Naive thymus-derived CD4-positive, alpha-beta T cell (primary cell): ENCODE measurements at regions of chr14 and their contacts with region 1.

Region 1: DNA sequence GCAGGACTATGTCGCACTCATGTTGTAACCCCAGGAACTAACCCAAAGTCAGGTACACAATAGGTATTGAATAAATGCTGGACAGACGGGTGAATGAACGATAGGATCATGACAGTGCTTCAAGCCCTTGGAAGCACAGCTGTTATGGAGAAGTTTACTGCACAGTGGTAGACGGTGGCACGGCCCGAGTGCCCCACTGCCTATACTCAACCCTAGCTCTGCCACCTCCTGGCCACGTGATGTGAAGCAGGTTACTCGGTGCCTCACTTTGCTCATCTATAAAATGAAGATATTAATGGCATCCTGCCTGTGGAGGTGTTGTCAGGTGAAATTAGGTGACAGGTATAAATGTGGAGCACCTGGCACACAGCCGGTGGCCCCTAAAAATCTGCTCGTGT is 5.8 kb downstream of the ASB2 start:
- DNase-seq: peak in 8 of 9 donors; percentile 43 to 63 (median 56)
- ATAC-seq: peak; percentile 93
- H3K4me3 ChIP-seq: peak overlapping the region; percentile 72
- H3K4me3 Mint-ChIP-seq: peak overlapping the region; percentile 82 to 93 (median 89)
- H3K27ac ChIP-seq: no peak overlapping the region
- H3K27ac Mint-ChIP-seq: peak overlapping the region in 8 of 9 donors; percentile 21 to 99 (median 70)
- H3K4me1 ChIP-seq: peaks cover 13 to 24% of the 10 kb centered on the region in 2 donors
- H3K4me1 Mint-ChIP-seq: peaks cover 14 to 91% (median 19%) of the 10 kb centered on the region in 7 donors
- H3K27me3 ChIP-seq: no peaks in the 10 kb centered on the region
- H3K27me3 Mint-ChIP-seq: peaks cover 0 to 2% (median under 1%) of the 10 kb centered on the region in 5 donors

Region 2: DNA sequence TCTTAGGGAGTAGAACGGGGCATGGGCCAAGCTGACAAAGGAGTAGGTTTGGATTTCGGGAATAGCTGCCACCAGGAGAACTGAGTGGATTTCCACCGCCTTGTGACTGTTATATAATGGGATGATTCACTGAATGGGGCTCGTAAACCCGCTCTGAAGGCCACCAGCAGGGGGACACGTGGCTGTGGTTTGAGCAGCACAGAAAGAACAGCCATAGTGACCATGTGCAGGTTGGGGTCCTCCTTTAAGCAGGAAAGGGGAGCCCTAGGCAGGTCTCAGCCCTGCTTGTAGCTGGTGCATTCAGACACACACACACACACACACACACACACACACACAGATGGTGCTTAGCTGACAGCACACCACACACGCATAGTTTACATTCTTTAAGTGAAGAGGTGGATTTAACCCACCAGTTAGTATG is 14.5 kb after region 1 on chr14:
- CTCF ChIA-PET with region 1: interaction called, 13 read pairs
- POLR2A ChIA-PET with region 1: interaction called, 3 read pairs
- intact Hi-C with region 1: no loop called
- DNase-seq: no peak
- ATAC-seq: no peak
- H3K4me3 ChIP-seq: no peak overlapping the region
- H3K4me3 Mint-ChIP-seq: no peak overlapping the region
- H3K27ac ChIP-seq: no peak overlapping the region
- H3K27ac Mint-ChIP-seq: no peak overlapping the region
- H3K4me1 ChIP-seq: peaks cover 0 to 2% of the 10 kb centered on the region in 2 donors
- H3K4me1 Mint-ChIP-seq: peaks cover 4 to 24% (median 18%) of the 10 kb centered on the region in 7 donors
- H3K27me3 ChIP-seq: no peaks in the 10 kb centered on the region
- H3K27me3 Mint-ChIP-seq: peaks cover 0 to 3% (median 0%) of the 10 kb centered on the region in 5 donors

Region 3: DNA sequence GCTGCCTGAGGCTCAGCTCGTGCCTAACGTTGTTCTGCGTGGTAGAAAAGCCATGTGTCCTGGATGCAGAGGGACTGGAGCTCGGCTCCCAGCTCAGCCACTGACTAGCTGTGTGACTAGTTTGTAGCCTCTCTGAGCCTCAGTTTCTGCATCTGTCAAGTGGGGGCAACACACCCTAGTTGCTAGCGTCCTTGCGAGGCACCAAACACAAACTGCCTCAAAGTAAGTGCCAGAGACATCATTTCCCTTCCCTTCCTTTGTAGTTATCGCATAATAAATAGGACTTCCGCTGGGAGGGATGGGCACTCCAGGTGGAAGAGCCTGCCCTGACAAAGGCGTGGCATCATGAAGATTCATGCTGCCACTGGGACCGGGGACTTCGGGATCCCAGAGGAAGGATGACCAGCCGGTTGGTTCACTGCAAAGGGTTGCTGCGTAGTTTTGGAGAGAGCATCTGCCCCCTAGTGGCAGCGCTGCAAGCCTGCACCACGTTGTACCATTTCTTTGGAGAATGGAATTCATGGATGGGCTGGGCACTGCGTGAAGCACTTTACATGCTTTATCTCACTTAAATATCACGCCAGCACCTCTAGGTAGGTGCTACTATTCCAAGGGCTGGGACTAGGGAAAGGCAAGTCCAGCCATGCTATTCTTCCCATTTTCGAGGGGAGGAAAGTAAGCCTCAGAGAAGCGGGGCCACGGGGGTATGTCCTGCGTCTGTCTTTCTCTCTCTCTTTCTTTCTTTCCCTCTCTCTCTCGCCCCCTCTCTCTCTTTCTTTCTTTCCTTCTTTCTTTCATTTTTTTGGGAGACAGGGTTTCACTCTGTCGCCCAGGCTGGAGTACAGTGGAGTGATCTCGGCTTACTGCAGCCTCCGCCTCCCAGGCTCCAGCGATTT is 31.2 kb after region 1 on chr14:
- CTCF ChIA-PET with region 1: interaction called, 14 read pairs
- POLR2A ChIA-PET with region 1: interaction called, 3 read pairs
- intact Hi-C with region 1: loop called (anchors 1 to 2 kb)
- DNase-seq: peak; percentile 28 to 63 (median 51)
- ATAC-seq: peak; percentile 85
- H3K4me3 ChIP-seq: no peak overlapping the region
- H3K4me3 Mint-ChIP-seq: peak overlapping the region in 9 of 10 donors; percentile 23 to 57 (median 53)
- H3K27ac ChIP-seq: no peak overlapping the region
- H3K27ac Mint-ChIP-seq: peak overlapping the region in 2 of 9 donors; percentile 38 to 78
- H3K4me1 ChIP-seq: peaks cover 4 to 6% of the 10 kb centered on the region in 2 donors
- H3K4me1 Mint-ChIP-seq: peaks cover 2 to 45% (median 10%) of the 10 kb centered on the region in 7 donors
- H3K27me3 ChIP-seq: no peaks in the 10 kb centered on the region
- H3K27me3 Mint-ChIP-seq: peaks cover 6 to 19% (median 8%) of the 10 kb centered on the region in 5 donors

Region 4: GRCh38 chr14:94031883-94032279 is 61.3 kb after region 1 on chr14:
- CTCF ChIA-PET with region 1: no interaction called
- POLR2A ChIA-PET with region 1: no interaction called
- intact Hi-C with region 1: no loop called
- DNase-seq: no peak
- ATAC-seq: no peak
- H3K4me3 ChIP-seq: no peak overlapping the region
- H3K4me3 Mint-ChIP-seq: no peak overlapping the region
- H3K27ac ChIP-seq: no peak overlapping the region
- H3K27ac Mint-ChIP-seq: no peak overlapping the region
- H3K4me1 ChIP-seq: peaks cover 3 to 5% of the 10 kb centered on the region in 2 donors
- H3K4me1 Mint-ChIP-seq: peaks cover 7 to 20% (median 12%) of the 10 kb centered on the region in 7 donors
- H3K27me3 ChIP-seq: no peaks in the 10 kb centered on the region
- H3K27me3 Mint-ChIP-seq: no peaks in the 10 kb centered on the region

Region 5: DNA sequence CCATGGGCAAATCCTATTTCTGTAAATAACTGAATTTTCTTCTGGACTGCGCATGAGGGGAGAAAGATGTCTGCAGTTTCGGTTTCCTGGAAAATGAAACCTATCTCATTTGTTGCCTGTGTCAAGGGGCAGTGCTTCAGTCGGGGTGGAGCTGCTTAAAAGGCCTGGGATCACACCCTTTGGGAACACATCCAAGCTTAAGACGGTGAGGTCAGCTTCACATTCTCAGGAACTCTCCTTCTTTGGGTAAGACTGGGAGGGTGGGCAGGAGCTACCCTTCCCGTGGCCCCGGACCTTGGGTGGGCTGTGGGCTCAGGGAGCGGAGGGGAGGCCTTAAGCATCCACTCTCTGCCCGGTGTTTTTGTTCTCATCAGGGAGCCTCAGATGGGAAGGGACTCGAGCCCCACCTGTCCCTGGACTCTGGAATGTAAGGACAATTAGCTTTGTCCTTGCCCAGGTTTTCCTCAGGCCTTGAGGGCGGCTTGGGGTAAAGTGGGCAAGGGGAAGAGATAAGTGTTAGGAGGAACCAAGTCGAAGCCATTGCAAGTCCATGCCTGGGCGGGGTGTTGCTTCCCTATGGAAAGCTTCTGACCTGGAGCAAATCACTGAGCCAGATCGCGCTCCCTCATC is 140.1 kb after region 1 on chr14 and contains the start of gene IFI27:
- CTCF ChIA-PET with region 1: no interaction called
- POLR2A ChIA-PET with region 1: no interaction called
- intact Hi-C with region 1: no loop called
- DNase-seq: no peak
- ATAC-seq: no peak
- H3K4me3 ChIP-seq: no peak within 1 kb of the TSS
- H3K4me3 Mint-ChIP-seq: peak within 1 kb of the TSS in 1 of 10 donors; percentile 84
- H3K27ac ChIP-seq: no peak within 1 kb of the TSS
- H3K27ac Mint-ChIP-seq: peak within 1 kb of the TSS in 1 of 9 donors; percentile 88
- H3K4me1 ChIP-seq: no peaks in the 10 kb centered on the region
- H3K4me1 Mint-ChIP-seq: peaks cover 0 to 42% (median 0%) of the 10 kb centered on the region in 7 donors
- H3K27me3 ChIP-seq: no peaks in the 10 kb centered on the region
- H3K27me3 Mint-ChIP-seq: peaks cover 2 to 9% (median 5%) of the 10 kb centered on the region in 5 donors
- total RNA-seq, gene IFI27: 1.00 to 221 (median 2.9) TPM in 3 of 5 experiments, not detected in the others